Spleen (tissue), 13 donors: ENCODE measurements at regions of chr1 and their contacts with region 1.

Region 1: DNA sequence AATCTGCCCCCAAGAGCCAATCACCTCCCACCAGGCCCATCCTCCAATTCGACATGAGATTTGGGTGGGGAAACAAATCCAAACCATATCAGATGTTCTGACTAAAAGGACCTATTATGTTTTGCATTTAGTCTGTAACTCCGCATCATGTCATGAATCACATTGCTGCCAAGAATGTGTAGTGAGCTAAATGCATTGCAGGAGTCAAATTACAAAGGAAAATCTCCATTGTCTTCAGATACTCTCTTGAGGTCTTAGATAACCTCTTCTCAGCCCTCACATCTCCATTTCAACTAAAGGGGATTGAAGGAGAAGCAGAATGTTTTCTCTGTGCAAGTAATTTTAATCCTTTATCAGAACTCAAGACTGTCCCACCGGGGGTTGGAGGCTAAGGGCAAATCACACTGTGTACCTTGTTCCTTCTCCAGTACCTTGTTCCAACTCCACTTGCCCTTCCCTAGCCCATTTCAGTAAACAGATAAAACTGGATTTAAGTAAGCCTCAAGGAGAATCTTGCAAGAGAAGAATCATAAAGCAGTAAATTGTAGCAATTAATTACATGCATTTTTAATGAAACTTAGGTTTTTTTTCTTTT is 34.1 kb downstream of the EXTL2 start:
- DNase-seq: no peak
- H3K4me3 ChIP-seq: no peak overlapping the region
- H3K27ac ChIP-seq: no peak overlapping the region
- H3K4me1 ChIP-seq: no peaks in the 10 kb centered on the region
- H3K27me3 ChIP-seq: no peaks in the 10 kb centered on the region
- CTCF ChIP-seq: no peak
- POLR2A ChIP-seq: no peak

Region 2: DNA sequence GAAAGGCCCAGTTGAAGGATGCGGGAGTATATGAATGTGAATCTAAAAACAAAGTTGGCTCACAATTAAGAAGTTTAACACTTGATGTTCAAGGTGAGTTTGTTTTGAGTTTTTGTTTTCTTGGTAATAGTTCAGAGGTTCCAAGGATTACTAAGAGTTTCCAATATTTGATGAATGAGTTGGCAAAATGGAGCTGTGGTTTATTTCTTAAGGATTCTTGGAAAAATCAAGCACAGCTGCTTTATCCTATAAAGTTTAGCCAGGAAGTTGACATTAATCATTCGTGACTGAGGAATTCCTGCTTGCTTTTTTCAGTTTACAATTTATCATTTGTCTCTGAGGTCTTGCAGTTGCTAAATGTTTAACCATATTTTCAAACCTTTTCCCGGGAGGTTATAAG is 125.8 kb before region 1 on chr1:
- intact Hi-C with region 1: loop called (anchors 5 kb)
- DNase-seq: no peak
- H3K4me3 ChIP-seq: no peak overlapping the region
- H3K27ac ChIP-seq: peak overlapping the region in 5 of 8 donors; percentile 19 to 86 (median 39)
- H3K4me1 ChIP-seq: peaks cover 0 to 40% (median 10%) of the 10 kb centered on the region in 6 donors
- H3K27me3 ChIP-seq: no peaks in the 10 kb centered on the region
- CTCF ChIP-seq: no peak
- POLR2A ChIP-seq: no peak